Left colon (tissue), 2 donors: ENCODE measurements at regions of chr3 and their contacts with region 1.

Region 1: GRCh38 chr3:42443819-42444436 is 33.5 kb upstream of the LYZL4 start:
- DNase-seq: peak; percentile 65 to 87
- ATAC-seq: peak; percentile 99

Region 2: GRCh38 chr3:42118762-42119361 is 325.1 kb before region 1 on chr3:
- intact Hi-C with region 1: loop called in 1 of 2 experiments (anchors 10 kb)
- DNase-seq: no peak
- ATAC-seq: peak; percentile 79

Region 3: DNA sequence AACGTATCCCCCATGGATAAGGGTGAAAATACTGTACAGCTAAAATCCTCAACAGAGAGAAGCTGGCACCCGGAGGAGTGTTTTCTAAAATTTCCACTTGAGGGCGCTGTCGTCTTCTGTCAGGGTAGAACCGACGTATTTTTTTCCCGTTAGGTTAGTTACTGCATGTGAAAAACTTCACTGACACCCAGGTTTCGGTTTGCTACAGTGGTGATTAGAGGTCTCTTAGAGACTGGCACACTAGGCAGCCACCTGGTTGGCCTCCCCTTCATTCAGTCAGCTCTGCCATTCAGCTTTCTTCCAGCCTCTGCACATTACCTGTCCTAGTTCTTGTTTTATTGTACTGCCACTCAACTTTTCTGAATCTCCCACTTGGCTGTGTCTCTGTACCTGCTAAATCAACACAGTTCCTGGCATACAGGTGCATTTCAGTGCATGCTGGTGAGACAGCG is 196.3 kb before region 1 on chr3:
- intact Hi-C with region 1: loop called (anchors 5 to 10 kb)
- DNase-seq: peak in 1 of 2 donors; percentile 46
- ATAC-seq: peak; percentile 61

Region 4: GRCh38 chr3:42256135-42256819 is 187.7 kb before region 1 on chr3:
- intact Hi-C with region 1: loop called in 1 of 2 experiments (anchors 10 kb)
- DNase-seq: no peak
- ATAC-seq: no peak